IMR-90 (cell line): ENCODE measurements at regions of chr7 and their contacts with region 1.

Region 1: DNA sequence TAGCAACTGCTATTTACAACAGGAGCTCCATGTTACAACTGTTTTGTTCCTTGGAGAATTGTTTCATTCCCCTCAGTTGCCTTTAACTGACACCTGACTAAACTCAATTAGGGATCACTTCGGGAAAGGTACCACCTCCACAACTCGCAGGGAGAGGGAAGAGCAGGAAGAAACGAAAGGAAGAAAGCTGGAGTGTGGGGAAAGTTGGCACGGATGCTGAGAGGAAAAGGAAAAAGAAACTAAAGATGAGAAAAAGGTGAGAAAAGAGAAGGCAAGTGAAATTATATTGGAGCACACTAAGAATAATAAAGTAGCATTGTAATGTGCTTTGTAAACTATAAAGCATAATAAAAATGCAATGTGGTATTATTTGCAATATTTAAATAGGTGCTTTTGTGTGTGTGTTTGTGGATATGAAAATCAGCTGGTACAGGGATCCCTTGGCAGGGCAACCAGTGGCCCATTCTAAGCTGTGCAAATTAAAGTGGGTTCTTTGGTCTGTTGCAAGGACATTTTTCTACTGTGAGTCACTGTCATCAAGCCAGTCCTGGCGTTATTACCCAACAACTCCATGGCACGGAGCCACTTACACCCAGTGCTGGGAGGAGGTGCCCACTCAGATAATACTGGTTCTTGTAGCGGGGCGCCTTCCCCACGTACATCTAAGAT is 45.9 kb downstream of the HIPK2 start:
- DNase-seq: peak; percentile 83
- ATAC-seq: peak; percentile 36
- H3K4me3 ChIP-seq: no peak overlapping the region
- H3K27ac ChIP-seq: peak overlapping the region; percentile 52
- H3K4me1 ChIP-seq: peaks cover 41% of the 10 kb centered on the region
- H3K27me3 ChIP-seq: no peaks in the 10 kb centered on the region
- CTCF ChIP-seq: no peak
- POLR2A ChIP-seq: no peak
- RAD21 ChIP-seq: no peak

Region 2: GRCh38 chr7:139680676-139681462 is 51.1 kb before region 1 on chr7:
- CTCF ChIA-PET with region 1: no interaction called
- POLR2A ChIA-PET with region 1: no interaction called
- dilution Hi-C with region 1: no loop called
- in situ Hi-C with region 1: no loop called
- intact Hi-C with region 1: loop called (anchors 5 kb)
- DNase-seq: peak; percentile 99
- ATAC-seq: peak; percentile 60
- H3K4me3 ChIP-seq: no peak overlapping the region
- H3K27ac ChIP-seq: peak overlapping the region; percentile 86
- H3K4me1 ChIP-seq: peaks cover 41% of the 10 kb centered on the region
- H3K27me3 ChIP-seq: no peaks in the 10 kb centered on the region
- CTCF ChIP-seq: no peak
- POLR2A ChIP-seq: peak; percentile 80; the same call in 1 of the 2 replicates
- RAD21 ChIP-seq: peak; percentile 18; the same call in 1 of the 2 replicates

Region 3: DNA sequence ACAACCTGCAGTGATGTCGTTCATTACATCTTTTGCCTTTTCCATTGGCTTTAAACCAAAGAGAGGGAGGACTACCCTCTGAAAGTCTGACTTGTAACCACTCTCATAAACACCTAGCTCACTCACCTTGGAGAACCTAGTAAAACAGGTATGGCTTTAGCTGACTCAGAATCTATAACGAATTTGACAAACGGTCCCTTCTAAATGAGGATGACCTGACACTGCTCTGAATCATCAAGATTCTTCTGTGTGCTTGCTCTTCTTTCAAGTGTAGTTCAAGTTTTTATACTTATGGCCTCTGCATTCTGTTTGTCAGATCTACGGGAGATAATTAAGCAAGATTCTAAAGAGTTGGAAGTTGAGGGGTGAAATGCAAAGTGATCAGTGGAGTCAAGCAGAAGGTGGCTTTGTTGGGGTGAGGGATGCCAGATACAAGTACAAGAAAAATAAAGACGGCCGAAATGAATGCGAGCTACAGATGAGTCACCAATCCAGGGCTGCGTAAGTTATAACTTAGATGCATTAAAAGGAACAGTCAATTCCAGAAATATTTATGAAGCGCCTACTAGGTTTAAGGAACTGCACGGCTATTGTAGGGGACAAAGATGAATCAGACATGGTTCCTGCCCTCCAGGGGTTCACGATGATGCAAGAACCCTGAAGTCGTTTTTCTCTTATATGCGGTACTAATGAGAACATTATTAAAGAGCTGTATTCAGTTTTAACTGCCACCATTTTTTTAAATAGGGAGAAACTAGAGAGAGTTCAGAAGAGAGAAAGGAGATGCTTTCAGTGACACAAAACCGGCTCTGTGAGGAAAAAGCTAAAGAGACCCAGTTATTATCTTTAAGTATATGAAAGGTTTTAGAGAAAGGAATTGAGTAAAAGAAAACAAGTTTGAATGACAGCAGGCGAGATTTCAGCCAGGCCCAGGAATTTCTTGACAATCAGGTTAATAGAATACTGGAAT is 39.4 kb after region 1 on chr7:
- CTCF ChIA-PET with region 1: no interaction called
- POLR2A ChIA-PET with region 1: no interaction called
- dilution Hi-C with region 1: no loop called
- in situ Hi-C with region 1: no loop called
- intact Hi-C with region 1: loop called (anchors 5 kb)
- DNase-seq: peak; percentile 94
- ATAC-seq: peak; percentile 68
- H3K4me3 ChIP-seq: peak overlapping the region; percentile 21; the same call in 1 of the 2 replicates
- H3K27ac ChIP-seq: peak overlapping the region; percentile 42
- H3K4me1 ChIP-seq: peaks cover 45% of the 10 kb centered on the region
- H3K27me3 ChIP-seq: no peaks in the 10 kb centered on the region
- CTCF ChIP-seq: no peak
- POLR2A ChIP-seq: no peak
- RAD21 ChIP-seq: no peak

Region 4: DNA sequence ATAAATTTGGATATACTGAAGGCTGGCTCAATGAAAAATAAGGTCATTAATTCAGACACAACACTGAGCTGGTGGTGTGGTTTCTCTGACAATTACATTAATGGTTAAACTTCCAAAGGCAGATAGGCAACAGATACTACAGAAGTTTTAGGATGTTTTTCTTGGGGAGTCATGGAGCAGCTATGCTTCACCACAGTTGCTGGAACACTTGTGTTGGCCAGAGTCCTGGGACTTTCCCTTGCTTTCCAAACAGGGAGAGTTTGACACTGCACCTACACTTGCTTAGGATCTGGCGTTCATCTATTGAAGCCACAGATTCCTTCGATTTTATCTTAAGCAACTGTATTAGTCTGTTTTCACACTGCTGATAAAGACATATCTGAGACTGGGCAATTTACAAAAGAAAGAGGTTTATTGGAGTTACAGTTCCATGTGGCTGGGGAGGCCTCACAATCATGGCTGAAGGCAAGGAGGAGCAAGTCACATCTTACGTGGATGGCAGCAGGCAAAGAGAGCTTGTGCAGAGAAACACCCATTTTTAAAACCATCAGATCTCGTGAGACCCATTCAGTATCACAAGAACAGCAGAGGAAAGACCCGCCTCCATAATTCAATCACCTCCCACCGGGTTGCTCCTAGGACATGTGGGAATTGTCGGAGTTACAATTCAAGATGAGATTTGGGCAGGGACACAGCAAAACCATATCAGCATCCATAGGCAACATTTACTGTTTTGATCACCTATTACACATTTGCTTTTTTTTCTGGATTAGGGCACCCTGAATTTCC is 1314.1 kb after region 1 on chr7:
- CTCF ChIA-PET with region 1: no interaction called
- POLR2A ChIA-PET with region 1: no interaction called
- dilution Hi-C with region 1: no loop called
- in situ Hi-C with region 1: no loop called
- intact Hi-C with region 1: no loop called
- DNase-seq: peak; percentile 66
- ATAC-seq: peak; percentile 70
- H3K4me3 ChIP-seq: no peak overlapping the region
- H3K27ac ChIP-seq: no peak overlapping the region
- H3K4me1 ChIP-seq: no peaks in the 10 kb centered on the region; the same call in 1 of the 2 replicates
- H3K27me3 ChIP-seq: no peaks in the 10 kb centered on the region
- CTCF ChIP-seq: no peak
- POLR2A ChIP-seq: no peak
- RAD21 ChIP-seq: no peak